Activated CD4-positive, alpha-beta T cell treated with anti-CD3 and anti-CD28 coated beads for 36 hours (primary cell): ENCODE measurements at regions of chr12 and their contacts with region 1.

Region 1: DNA sequence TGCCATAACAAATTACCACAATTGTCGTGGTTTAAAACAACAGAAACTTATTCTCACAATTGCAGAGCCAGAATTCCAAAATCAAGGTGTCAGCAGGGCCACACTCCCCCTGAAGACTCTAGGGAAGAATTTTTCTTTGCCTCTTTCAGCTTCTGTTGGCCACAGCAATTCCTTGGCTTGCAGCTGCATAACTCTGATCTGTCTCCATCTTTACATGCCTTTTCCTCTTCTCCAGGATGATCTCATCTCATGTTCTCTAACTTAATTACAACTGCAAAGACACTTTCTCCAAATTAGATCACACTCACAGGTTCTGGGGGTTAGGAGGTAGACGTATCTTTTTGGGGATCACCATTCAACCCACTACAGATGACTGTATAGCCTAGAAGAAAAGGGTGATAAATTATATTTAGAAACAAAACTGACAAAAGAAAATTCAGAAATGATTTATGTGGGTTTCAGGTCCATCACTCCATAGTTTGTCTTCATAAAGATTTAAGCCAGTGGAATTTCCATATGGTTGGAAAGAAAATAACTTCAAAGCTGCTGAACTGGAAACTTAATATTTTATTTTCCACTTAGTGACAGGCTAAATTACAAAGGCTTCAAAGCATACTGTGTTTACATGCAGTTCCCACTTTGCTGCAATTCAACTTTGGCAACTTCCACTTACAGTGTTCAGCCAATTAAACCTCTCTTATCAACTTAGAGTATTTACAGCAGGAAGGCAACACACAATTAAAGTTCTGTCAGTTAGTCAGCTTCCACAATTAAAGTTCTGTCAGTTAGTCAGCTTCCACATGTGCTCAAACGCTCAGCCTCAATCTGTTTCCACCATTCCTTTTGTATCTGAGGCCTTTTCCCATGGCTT is 213.3 kb downstream of the EPS8 start:
- DNase-seq: no peak
- ATAC-seq: peak; percentile 18
- H3K4me3 Mint-ChIP-seq: no peak overlapping the region
- H3K27ac Mint-ChIP-seq: peak overlapping the region; percentile 42
- H3K4me1 Mint-ChIP-seq: peaks cover 62% of the 10 kb centered on the region
- H3K27me3 Mint-ChIP-seq: peaks cover 2% of the 10 kb centered on the region

Region 2: DNA sequence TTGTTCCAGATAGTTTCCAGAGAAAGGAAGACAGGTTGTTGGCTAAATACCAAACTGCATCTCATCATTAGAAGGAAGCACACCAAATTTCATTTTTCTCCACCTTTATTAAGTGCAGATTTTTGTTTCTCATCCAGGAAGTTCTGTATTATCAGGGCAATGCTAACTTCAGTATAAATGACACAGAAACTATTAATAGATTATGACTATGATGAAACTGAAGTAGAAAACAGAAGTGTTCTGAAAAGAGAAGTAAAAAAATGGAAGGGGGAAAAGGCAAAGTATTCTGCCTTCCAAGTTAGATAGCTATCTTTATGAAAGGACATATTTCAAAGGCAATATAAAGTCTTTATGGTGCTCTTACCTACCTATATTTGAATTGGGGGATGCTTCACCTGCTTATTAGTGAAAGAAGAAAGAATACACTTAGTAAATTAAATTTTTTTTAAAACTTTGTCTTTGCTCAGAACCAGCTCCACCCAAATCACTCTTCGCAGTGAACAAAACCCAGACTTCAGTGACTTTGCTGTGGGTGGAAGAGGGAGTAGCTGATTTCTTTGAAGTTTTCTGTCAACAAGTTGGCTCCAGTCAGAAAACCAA is 29.7 kb before region 1 on chr12:
- CTCF ChIA-PET with region 1: interaction called, 11 read pairs
- POLR2A ChIA-PET with region 1: no interaction called
- intact Hi-C with region 1: loop called (anchors 1 to 2 kb)
- DNase-seq: peak; percentile 32
- ATAC-seq: peak; percentile 78
- H3K4me3 Mint-ChIP-seq: no peak overlapping the region
- H3K27ac Mint-ChIP-seq: peak overlapping the region; percentile 78
- H3K4me1 Mint-ChIP-seq: peaks cover 62% of the 10 kb centered on the region
- H3K27me3 Mint-ChIP-seq: no peaks in the 10 kb centered on the region